Naive thymus-derived CD4-positive, alpha-beta T cell (primary cell): ENCODE measurements at regions of chr2 and their contacts with region 1.

Region 1: DNA sequence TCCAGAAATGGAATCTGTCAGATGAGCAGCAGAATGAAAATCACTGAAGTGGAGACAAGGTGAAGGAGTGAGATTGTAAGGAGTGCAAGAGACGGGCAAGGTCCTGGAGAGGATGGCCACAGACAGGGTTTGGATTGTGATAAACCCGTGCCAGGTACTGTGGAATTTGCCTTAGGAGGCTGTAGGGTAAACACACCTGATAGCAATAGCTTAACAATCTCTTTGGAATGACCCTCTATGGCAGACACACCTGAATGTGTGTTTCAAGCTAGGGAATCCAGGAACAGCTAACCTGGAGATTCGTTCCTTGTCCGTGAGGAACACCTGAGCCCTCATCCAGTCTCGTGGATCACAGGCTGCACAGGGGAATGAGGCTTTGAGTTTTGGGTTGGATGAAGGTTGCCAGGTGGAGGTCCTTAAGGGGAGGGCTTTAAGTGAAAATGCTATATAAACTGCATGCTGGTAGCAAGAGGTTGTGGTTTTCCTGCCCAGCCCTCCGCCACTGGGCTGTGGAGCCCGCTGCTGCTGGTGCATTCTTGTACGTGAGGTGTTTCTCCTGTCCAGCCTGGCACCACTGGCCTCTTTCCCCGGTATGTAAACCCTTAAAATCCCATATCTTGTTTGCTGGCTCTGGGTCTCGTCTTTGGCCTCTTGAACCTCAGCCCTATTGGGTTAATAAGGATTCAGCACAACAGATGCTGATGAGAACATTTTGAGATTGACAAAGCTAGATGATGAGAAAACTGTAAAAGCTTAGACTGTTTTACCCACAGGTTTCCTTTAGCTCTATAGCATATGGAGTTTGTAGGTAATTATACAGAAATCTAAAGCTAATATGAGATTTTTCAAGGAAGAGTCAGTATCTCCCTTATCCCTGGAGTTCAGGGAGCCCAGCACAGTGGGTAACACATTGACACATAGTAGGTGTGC is 117.9 kb downstream of the ARHGAP15 start:
- DNase-seq: peak in 2 of 9 donors; percentile 25 to 36
- ATAC-seq: peak; percentile 73
- H3K4me3 ChIP-seq: peak overlapping the region; percentile 46
- H3K4me3 Mint-ChIP-seq: peak overlapping the region in 2 of 10 donors; percentile 25 to 71
- H3K27ac ChIP-seq: peak overlapping the region; percentile 53
- H3K27ac Mint-ChIP-seq: peak overlapping the region in 2 of 9 donors; percentile 92
- H3K4me1 ChIP-seq: peaks cover 22 to 32% of the 10 kb centered on the region in 2 donors
- H3K4me1 Mint-ChIP-seq: peaks cover 11 to 43% (median 22%) of the 10 kb centered on the region in 7 donors
- H3K27me3 ChIP-seq: no peaks in the 10 kb centered on the region
- H3K27me3 Mint-ChIP-seq: no peaks in the 10 kb centered on the region

Region 2: DNA sequence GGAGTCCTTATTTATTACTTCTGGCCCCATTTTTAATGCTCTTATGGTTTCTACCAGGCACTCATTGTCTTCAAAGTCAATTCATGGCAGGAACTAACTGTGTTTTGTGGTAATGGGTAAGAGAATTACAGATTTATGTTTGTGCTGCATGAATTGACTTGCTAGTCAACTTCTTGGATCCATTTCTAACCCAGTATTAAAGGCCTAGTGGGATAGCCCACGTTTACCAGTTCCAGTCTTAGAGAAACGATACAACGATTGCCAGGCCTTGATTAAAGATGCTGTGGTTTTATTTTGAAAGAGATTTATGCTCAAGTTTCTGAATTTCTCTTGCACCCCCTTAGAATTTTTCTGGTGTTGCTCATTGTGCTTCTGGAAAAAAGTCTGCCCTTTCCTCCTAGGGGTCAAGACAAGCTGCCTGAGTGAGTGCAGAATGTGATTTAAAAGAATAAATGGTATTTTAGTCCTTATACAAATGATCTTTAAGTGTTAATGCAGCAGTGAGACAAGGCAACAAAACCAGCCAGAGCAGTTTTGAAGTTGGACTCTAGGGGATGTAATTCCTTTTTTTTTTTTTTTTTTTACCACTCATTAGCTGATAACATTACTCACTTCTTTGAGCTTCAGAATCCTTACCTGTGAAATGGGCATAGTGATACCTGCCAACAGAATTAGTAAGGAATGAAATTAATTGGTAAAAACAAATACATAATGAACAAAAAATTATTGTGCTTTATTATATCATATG is 16.4 kb before region 1 on chr2:
- CTCF ChIA-PET with region 1: no interaction called
- POLR2A ChIA-PET with region 1: interaction called, 5 read pairs
- intact Hi-C with region 1: loop called (anchors 2 kb)
- DNase-seq: no peak
- ATAC-seq: no peak
- H3K4me3 ChIP-seq: no peak overlapping the region
- H3K4me3 Mint-ChIP-seq: peak overlapping the region in 1 of 10 donors; percentile 7
- H3K27ac ChIP-seq: no peak overlapping the region
- H3K27ac Mint-ChIP-seq: peak overlapping the region in 6 of 9 donors; percentile 31 to 69 (median 54)
- H3K4me1 ChIP-seq: peaks cover 8 to 12% of the 10 kb centered on the region in 2 donors
- H3K4me1 Mint-ChIP-seq: peaks cover 15 to 52% (median 32%) of the 10 kb centered on the region in 7 donors
- H3K27me3 ChIP-seq: no peaks in the 10 kb centered on the region
- H3K27me3 Mint-ChIP-seq: no peaks in the 10 kb centered on the region